Left cardiac atrium (tissue), 4 donors: ENCODE measurements at regions of chr3 and their contacts with region 1.

Region 1: DNA sequence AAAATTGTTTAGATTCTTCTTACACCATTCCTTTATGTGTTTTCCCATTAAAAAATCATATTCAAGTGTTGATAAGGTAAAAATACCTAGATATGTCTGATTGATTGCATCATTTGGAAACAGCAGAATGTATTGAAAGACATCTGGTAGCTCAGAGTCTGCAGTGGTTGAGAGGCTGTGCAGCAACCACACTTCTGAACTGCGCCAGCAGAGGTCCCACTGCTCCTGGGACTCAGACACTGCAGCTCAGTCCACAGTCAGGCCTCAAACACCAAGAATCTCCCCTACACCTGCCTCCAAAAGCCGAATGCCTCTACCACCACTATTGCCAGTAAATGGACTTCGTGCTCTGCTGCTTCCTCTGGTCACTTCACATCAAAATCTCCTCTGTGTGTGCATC is 176.9 kb upstream of the LMCD1 start:
- DNase-seq: peak; percentile 50
- ATAC-seq: peak; percentile 74 to 95

Region 2: GRCh38 chr3:8416965-8417364 is 92.2 kb after region 1 on chr3:
- intact Hi-C with region 1: loop called (anchors 2 to 10 kb)
- DNase-seq: peak; percentile 30
- ATAC-seq: peak in 1 of 2 donors; percentile 56